ENCODE measurements at regions of chr6 and their contacts with region 1.

Region 1: GRCh38 chr6:66421570-66421969 is 714.5 kb upstream of the EYS start:
- DNase-seq: no peak
- ATAC-seq: no peak
- H3K4me3 ChIP-seq: no peak overlapping the region
- H3K27ac ChIP-seq: no peak overlapping the region
- H3K4me1 ChIP-seq: no peaks in the 10 kb centered on the region
- H3K27me3 ChIP-seq: no peaks in the 10 kb centered on the region

Region 2: GRCh38 chr6:66396549-66396948 is 25.0 kb before region 1 on chr6:
- intact Hi-C with region 1: loop called in 1 of 2 experiments (anchors 1 kb)
- DNase-seq: no peak
- ATAC-seq: peak; percentile 52
- H3K4me3 ChIP-seq: no peak overlapping the region
- H3K27ac ChIP-seq: no peak overlapping the region
- H3K4me1 ChIP-seq: no peaks in the 10 kb centered on the region
- H3K27me3 ChIP-seq: no peaks in the 10 kb centered on the region

Measured in aorta (tissue), 5 donors.